Heart right ventricle (tissue), 16 donors: ENCODE measurements at regions of chr5 and their contacts with region 1.

Region 1: DNA sequence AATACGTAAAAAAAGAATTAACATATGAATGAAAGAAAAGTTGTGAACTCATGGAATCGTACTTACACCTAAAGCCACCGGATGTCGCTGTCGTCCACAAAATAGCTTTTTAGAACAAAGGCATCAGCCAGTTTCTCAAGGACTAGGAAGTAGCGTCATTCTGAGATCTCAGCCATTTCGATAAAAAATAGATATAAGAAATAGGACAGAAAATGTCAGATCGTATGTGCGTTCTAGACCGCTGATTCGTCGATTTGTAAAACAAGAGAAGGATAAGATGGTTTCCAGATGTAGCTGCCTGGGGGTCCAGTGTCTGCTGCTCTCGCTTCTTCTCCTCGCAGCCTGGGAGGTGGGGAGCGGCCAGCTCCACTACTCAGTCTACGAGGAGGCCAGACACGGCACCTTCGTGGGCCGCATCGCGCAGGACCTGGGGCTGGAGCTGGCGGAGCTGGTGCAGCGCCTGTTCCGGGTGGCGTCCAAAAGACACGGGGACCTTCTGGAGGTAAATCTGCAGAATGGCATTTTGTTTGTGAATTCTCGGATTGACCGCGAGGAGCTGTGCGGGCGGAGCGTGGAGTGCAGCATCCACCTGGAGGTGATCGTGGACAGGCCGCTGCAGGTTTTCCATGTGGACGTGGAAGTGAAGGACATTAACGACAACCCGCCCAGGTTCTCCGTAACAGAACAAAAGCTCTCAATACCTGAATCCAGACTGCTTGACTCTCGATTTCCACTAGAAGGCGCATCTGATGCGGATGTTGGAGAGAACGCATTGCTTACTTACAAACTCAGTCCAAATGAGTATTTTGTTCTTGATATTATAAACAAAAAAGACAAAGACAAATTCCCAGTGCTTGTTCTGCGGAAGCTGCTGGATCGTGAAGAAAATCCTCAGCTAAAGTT is at the start of gene PCDHA10:
- DNase-seq: no peak
- ATAC-seq: no peak
- H3K4me3 ChIP-seq: peak within 1 kb of the TSS in 6 of 10 donors; percentile 7 to 43 (median 16)
- H3K27ac ChIP-seq: no peak within 1 kb of the TSS
- H3K4me1 ChIP-seq: no peaks in the 10 kb centered on the region
- H3K27me3 ChIP-seq: peaks cover 0 to 94% (median 28%) of the 10 kb centered on the region in 7 donors
- CTCF ChIP-seq: peak in 4 of 9 donors; percentile 8 to 47 (median 19)
- total RNA-seq, gene PCDHA10: 0.02 to 0.37 (median 0.07) TPM in 7 of 10 donors, not detected in the others

Region 2: GRCh38 chr5:140557136-140557805 is 298.8 kb before region 1 on chr5 and contains the start of gene SRA1:
- intact Hi-C with region 1: no loop called
- DNase-seq: peak; percentile 94
- ATAC-seq: peak; percentile 92 to 98 (median 97)
- H3K4me3 ChIP-seq: peak within 1 kb of the TSS; percentile 23 to 93 (median 71)
- H3K27ac ChIP-seq: peak within 1 kb of the TSS; percentile 44 to 98 (median 93)
- H3K4me1 ChIP-seq: peaks cover 8 to 58% (median 46%) of the 10 kb centered on the region in 9 donors
- H3K27me3 ChIP-seq: no peaks in the 10 kb centered on the region
- CTCF ChIP-seq: peak in 1 of 9 donors; percentile 10
- total RNA-seq, gene SRA1: 22.7 to 42.2 (median 32.5) TPM

Region 3: DNA sequence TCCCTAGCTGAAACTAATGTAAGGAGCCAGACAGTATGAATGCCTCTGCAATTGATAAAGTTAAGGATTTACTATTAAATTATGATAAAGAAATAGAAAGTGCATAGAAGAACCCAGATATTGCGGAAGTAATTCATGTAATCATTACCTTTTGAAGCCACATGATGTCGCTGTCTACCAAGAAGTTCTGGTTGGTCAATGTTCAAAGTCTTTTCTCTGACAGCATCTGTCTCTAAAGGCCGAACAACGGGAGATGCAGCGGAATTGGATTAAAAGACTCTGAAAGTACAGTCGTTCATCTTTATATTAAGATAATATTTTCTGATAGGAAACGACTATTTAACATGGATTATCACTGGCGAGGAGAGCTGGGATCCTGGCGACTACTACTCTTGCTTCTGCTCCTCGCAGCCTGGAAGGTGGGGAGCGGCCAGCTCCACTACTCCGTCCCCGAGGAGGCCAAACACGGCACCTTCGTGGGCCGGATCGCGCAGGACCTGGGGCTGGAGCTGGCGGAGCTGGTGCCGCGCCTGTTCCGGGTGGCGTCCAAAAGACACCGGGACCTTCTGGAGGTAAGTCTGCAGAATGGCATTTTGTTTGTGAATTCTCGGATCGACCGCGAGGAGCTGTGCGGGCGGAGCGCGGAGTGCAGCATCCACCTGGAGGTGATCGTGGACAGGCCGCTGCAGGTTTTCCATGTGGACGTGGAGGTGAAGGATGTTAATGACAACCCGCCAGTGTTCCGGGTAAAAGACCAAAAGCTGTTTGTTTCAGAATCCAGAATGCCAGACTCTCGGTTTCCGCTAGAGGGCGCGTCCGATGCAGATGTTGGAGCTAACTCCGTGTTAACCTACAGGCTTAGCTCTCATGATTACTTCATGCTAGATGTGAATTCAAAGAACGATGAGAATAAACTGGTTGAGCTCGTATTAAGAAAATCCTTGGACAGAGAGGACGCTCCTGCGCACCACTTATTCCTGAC is 14.8 kb before region 1 on chr5 and contains the start of gene PCDHA8:
- intact Hi-C with region 1: loop called in 1 of 10 experiments (anchors 1 kb)
- DNase-seq: no peak
- ATAC-seq: no peak
- H3K4me3 ChIP-seq: no peak within 1 kb of the TSS
- H3K27ac ChIP-seq: no peak within 1 kb of the TSS
- H3K4me1 ChIP-seq: no peaks in the 10 kb centered on the region
- H3K27me3 ChIP-seq: peaks cover 0 to 92% (median 36%) of the 10 kb centered on the region in 7 donors
- CTCF ChIP-seq: peak in 3 of 9 donors; percentile 3 to 20 (median 14)
- total RNA-seq, gene PCDHA8: 0.04 to 0.13 TPM in 2 of 10 donors, not detected in the others